ENCODE measurements at regions of chr6 and their contacts with region 1.

Region 1: DNA sequence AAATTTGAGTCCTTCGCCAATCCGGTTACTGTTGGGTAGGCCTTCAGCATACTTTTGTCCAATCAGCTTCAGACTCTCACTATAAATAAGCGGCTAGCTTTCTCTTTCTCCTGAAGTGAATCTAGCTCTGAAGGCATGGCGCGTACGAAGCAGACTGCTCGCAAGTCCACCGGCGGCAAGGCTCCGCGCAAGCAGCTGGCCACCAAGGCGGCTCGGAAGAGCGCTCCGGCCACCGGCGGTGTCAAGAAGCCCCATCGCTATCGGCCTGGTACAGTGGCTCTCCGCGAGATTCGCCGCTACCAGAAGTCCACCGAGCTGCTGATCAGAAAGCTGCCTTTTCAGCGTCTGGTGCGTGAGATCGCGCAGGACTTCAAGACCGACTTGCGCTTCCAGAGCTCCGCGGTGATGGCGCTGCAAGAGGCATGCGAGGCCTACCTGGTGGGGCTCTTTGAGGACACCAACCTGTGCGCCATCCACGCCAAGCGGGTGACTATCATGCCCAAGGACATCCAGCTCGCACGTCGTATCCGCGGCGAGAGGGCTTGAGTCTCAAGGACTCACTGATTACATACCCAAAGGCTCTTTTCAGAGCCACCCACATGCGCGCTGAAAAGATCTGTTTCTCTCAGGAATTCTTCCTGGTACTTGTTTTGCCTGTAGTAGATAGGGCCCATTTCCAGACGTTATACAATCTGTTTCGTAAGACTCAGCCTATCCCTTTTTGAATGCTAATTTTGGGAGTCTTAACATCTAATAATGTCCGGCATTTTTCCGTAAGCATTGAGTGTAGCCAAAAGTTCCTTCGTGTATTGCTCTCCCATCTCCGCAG is 102.0 kb downstream of the OR2B2 start:
- DNase-seq: peak; percentile 77
- CTCF ChIP-seq: peak; percentile 21

Region 2: DNA sequence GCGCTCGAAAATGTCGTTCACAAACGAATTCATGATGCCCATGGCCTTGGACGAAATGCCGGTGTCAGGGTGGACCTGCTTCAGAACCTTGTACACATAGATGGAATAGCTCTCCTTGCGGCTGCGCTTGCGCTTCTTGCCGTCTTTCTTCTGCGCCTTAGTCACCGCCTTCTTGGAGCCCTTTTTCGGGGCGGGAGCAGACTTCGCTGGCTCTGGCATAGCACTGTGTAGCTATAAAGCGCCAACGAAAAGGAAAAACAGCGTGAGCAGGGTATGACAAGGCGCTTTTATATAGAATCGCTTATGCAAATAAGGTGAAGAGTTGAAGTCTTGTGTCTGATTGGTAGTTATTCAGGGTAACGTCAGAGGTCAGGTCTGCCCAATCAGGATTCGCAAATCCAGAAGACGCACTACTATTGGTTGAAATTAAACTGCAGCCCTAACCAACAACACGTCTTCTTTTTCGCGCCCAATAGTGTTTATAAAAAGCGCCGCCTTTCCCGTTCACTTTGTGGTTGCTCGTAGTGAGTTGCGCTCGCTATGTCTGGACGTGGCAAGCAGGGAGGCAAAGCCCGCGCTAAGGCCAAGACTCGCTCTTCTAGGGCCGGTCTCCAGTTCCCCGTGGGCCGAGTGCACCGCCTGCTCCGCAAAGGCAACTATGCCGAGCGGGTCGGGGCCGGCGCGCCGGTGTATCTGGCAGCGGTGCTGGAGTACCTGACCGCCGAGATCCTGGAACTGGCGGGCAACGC is 677.4 kb before region 1 on chr6:
- CTCF ChIA-PET with region 1: interaction called, 3 read pairs
- POLR2A ChIA-PET with region 1: interaction called, 10 read pairs
- DNase-seq: peak; percentile 95
- CTCF ChIP-seq: no peak

Region 3: GRCh38 chr6:27761391-27761790 is 48.8 kb before region 1 on chr6:
- CTCF ChIA-PET with region 1: interaction called, 13 read pairs
- POLR2A ChIA-PET with region 1: interaction called, 3 read pairs
- DNase-seq: peak; percentile 57
- CTCF ChIP-seq: no peak

Region 4: GRCh38 chr6:27785294-27785693 is 24.9 kb before region 1 on chr6:
- CTCF ChIA-PET with region 1: no interaction called
- POLR2A ChIA-PET with region 1: no interaction called
- DNase-seq: no peak
- CTCF ChIP-seq: no peak

Region 5: GRCh38 chr6:27825025-27825793 is 15.1 kb after region 1 on chr6:
- CTCF ChIA-PET with region 1: interaction called, 4 read pairs
- POLR2A ChIA-PET with region 1: interaction called, 120 read pairs
- DNase-seq: no peak
- CTCF ChIP-seq: no peak

Region 6: DNA sequence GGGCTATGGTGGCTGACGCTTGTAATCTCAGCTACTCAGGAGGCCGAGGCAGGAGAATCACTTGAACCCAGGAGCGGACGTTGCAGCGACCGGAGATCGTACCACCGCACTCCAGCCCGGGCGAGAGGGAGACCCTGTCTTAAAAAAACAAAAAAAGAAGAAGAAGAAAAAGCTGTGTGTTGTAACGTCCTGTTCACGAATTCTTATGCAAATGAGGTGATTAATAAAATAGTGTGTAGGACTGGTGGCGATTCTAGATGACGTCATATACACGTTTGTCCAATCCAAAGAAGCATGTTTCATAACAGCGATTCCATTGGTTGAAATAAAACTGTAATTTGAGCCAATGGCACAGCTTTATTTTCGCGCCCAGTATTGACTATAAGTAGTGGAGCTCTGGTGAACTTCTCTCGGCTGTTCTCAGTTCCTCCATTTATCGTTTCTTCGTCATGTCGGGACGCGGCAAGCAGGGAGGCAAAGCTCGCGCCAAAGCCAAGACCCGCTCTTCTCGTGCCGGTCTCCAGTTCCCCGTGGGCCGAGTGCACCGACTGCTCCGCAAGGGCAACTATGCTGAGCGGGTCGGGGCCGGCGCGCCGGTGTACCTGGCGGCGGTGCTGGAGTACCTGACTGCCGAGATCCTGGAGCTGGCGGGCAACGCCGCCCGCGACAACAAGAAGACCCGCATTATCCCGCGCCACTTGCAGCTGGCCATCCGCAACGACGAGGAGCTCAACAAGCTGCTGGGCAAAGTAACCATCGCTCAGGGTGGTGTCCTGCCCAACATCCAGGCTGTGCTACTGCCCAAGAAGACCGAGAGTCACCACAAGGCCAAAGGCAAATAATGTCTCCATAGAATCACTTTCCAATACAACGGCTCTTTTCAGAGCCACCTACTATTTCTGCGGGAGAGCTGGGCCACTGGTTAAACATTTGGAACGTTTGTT is 55.0 kb after region 1 on chr6:
- CTCF ChIA-PET with region 1: interaction called, 9 read pairs
- POLR2A ChIA-PET with region 1: interaction called, 69 read pairs
- DNase-seq: peak; percentile 89
- CTCF ChIP-seq: no peak

Region 7: GRCh38 chr6:28729501-28730402 is 919.6 kb after region 1 on chr6:
- CTCF ChIA-PET with region 1: no interaction called
- POLR2A ChIA-PET with region 1: interaction called, 11 read pairs
- DNase-seq: no peak
- CTCF ChIP-seq: no peak

Measured in GM10248 (cell line).